ENCODE measurements at regions of chrX and their contacts with region 1.

Region 1: DNA sequence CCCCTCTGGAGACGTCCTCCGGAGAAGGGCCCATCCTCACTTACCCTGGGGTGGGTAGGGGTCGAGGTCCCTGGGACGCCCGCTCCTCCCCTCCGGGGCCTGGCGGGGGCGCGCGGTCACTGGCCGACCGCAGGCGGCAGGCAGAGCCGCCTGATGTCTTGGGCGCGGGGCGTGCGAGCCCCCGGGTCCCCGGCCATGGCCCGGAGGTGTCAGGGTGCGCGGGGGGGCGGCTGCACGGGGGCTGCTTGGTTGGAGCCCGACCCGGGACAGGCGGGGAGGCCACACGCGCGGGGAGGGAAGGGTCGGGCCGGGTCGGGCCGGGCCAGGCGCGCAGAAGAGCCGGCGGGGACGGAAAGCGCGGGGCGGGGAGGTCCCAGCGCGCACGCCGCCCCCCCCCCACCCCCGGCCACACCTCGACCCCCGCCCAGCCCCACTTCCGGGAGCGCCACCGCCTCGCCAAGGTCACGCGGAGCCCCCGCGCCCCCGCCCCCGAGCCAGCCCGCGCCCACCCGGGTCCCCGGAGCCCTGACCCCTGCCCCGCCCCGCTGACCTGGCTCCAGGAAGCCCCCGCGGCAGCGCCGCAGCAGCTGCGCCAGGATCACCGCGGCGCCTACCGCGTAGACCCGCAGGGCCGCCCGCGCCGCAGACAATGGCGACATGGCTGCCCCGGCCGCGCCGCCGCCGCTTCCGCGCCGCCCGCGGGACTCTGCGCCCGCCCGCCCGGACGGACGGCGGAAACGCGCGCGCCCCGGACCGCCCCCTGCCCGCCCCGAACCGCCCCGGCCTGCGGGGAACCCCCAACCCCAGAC is at the starts of genes DHRSX and ZBED1:
- DNase-seq: peak; percentile 66
- H3K4me3 Mint-ChIP-seq: peak within 1 kb of the TSS; percentile 78
- H3K27ac Mint-ChIP-seq: peak within 1 kb of the TSS; percentile 70
- H3K4me1 Mint-ChIP-seq: peaks cover 27% of the 10 kb centered on the region
- H3K27me3 Mint-ChIP-seq: no peaks in the 10 kb centered on the region
- total RNA-seq, gene DHRSX: 20.7 to 21.3 TPM
- total RNA-seq, gene ZBED1: 22.5 to 25.3 TPM

Region 2: GRCh38 chrX:2608638-2609430 is 108.4 kb after region 1 on chrX:
- CTCF ChIA-PET with region 1: no interaction called
- POLR2A ChIA-PET with region 1: no interaction called
- intact Hi-C with region 1: loop called (anchors 5 kb)
- DNase-seq: peak; percentile 92
- H3K4me3 Mint-ChIP-seq: peak overlapping the region; percentile 82
- H3K27ac Mint-ChIP-seq: peak overlapping the region; percentile 87
- H3K4me1 Mint-ChIP-seq: peaks cover 45% of the 10 kb centered on the region
- H3K27me3 Mint-ChIP-seq: no peaks in the 10 kb centered on the region

Region 3: GRCh38 chrX:2620576-2620975 is 120.1 kb after region 1 on chrX:
- CTCF ChIA-PET with region 1: no interaction called
- POLR2A ChIA-PET with region 1: no interaction called
- intact Hi-C with region 1: no loop called
- DNase-seq: no peak
- H3K4me3 Mint-ChIP-seq: no peak overlapping the region
- H3K27ac Mint-ChIP-seq: no peak overlapping the region
- H3K4me1 Mint-ChIP-seq: peaks cover under 1% of the 10 kb centered on the region
- H3K27me3 Mint-ChIP-seq: no peaks in the 10 kb centered on the region

Measured in activated CD4-positive, alpha-beta memory T cell treated with anti-CD3 and anti-CD28 coated beads for 36 hours (primary cell).